Stomach (tissue), 19 donors: ENCODE measurements at regions of chr1 and their contacts with region 1.

Region 1: DNA sequence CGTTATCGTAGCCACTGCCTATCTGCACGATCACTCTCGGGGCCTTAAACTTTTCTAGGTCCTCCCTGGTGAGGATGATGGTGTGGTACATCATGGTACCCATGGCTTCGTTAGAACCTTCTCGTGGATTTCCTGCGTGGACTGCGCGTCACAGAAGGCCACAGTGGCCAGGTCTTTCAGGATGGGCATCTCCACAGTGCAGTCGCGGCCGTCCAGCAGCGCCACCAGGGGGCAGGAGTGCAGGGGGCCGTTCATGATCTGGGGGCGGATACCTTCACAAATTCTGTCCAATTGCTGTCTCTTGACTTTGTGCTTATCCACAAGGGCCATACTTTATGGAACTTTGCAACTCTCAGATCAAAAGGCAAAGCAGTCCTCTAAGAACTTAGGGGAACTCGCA is 69.6 kb downstream of the WLS start:
- DNase-seq: no peak
- H3K4me3 ChIP-seq: no peak overlapping the region
- H3K27ac ChIP-seq: no peak overlapping the region
- H3K4me1 ChIP-seq: peaks cover 0 to 15% (median 0%) of the 10 kb centered on the region in 4 donors
- H3K27me3 ChIP-seq: no peaks in the 10 kb centered on the region
- CTCF ChIP-seq: no peak
- EP300 ChIP-seq: no peak
- POLR2A ChIP-seq: no peak

Region 2: GRCh38 chr1:67535474-67535873 is 627.3 kb before region 1 on chr1:
- intact Hi-C with region 1: no loop called
- DNase-seq: peak; percentile 85 to 93
- H3K4me3 ChIP-seq: no peak overlapping the region
- H3K27ac ChIP-seq: peak overlapping the region in 4 of 5 donors; percentile 30 to 75 (median 62)
- H3K4me1 ChIP-seq: peaks cover 0 to 30% (median 18%) of the 10 kb centered on the region in 4 donors
- H3K27me3 ChIP-seq: no peaks in the 10 kb centered on the region
- CTCF ChIP-seq: peak in 5 of 7 experiments; percentile 79 to 92 (median 88)
- EP300 ChIP-seq: no peak
- POLR2A ChIP-seq: no peak

Region 3: DNA sequence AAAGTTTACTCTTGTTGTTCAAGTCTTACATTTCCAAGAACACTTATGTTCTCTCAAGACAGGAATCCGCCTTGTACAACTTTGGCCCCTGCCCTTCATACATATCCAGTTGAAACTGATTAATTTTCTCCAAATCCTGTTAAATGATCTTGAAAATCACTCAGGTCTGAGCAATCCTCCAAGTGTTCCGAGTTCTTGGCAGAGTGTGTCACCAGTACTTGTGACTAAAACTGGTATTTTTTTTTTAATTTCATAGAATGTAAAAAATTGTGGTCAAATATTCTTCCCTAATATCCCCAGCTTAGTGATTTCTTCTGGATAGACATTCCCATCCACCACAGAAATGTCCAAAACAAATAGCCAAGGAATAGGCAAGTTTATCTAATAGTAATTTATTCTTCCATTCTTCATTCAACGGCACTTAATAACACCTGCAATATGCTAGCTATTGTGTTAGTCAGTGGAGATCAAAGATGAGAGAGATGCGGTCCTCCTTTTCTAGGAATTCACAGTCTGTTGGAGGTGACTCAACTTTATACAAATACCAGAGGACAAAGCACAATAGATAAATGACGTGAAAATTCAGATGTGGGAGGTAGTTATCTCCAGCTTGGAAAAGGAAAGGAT is 183.8 kb before region 1 on chr1:
- intact Hi-C with region 1: no loop called
- DNase-seq: no peak
- H3K4me3 ChIP-seq: no peak overlapping the region
- H3K27ac ChIP-seq: no peak overlapping the region
- H3K4me1 ChIP-seq: no peaks in the 10 kb centered on the region
- H3K27me3 ChIP-seq: no peaks in the 10 kb centered on the region
- CTCF ChIP-seq: no peak
- EP300 ChIP-seq: no peak
- POLR2A ChIP-seq: no peak

Region 4: GRCh38 chr1:68232354-68233148 is 69.8 kb after region 1 on chr1 and contains the start of gene WLS:
- intact Hi-C with region 1: loop called (anchors 10 kb)
- DNase-seq: peak; percentile 83 to 94
- H3K4me3 ChIP-seq: peak within 1 kb of the TSS; percentile 69 to 76 (median 75)
- H3K27ac ChIP-seq: peak within 1 kb of the TSS; percentile 88 to 92 (median 91)
- H3K4me1 ChIP-seq: peaks cover 0 to 36% (median 30%) of the 10 kb centered on the region in 4 donors
- H3K27me3 ChIP-seq: peaks cover 0 to 5% (median 0%) of the 10 kb centered on the region in 3 donors
- CTCF ChIP-seq: no peak
- EP300 ChIP-seq: no peak
- POLR2A ChIP-seq: peak in 2 of 4 donors; percentile 41 to 66
- total RNA-seq, gene WLS: 56.2 to 194 (median 92.2) TPM